PC-9 (cell line): ENCODE measurements at regions of chr3 and their contacts with region 1.

Region 1: GRCh38 chr3:101036213-101036618 is 43.0 kb upstream of the ABI3BP start:
- DNase-seq: peak; percentile 91 to 99
- H3K4me3 ChIP-seq: peak overlapping the region; percentile 14; the same call in 1 of the 2 replicates
- H3K27ac ChIP-seq: peak overlapping the region; percentile 92
- H3K4me1 ChIP-seq: peaks cover 35% of the 10 kb centered on the region
- H3K27me3 ChIP-seq: no peaks in the 10 kb centered on the region
- CTCF ChIP-seq: no peak

Region 2: DNA sequence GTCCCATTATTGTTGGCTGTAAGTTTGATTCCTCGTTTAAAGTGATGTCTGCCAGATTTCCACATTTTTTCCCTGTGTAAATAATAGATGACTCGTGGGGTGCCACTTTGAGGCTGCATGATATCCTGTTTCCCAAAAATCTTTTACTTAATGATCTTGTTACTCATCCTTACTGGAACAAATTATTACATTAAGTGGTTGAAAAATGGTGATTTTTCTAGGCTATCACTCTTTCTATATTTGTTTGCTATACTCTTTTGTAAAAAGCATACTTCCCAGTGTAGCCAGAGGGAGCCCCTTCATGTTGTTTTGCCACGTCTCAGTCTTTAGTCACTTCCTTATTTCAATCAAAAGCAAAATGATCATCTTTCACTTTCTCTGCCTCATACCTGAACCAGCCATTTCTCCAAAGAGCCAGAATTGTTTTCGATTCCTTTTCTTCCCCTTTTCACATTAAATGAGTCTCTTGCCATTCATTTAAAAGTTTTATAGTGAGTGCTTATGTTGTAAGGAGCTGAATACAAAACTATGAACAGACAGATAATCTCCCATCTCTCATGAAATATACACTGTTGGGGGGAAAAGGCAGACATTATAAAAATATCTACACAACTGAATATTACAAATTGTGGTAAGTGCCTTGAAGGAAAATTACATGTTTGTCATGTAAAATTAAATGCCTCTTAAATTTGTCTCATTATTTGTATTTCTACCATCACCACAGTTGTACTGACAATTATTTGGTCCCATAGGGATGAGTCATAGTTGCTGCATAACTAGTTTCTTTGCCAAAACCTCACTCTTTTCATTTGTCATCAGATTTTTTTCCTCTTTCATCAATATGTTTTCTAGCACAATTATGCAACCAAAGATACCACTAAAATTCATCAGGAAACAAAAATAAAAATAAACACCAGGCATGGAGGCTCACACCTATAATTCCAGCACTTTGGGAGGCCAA is 385.3 kb before region 1 on chr3:
- CTCF ChIA-PET with region 1: no interaction called
- POLR2A ChIA-PET with region 1: no interaction called
- intact Hi-C with region 1: loop called (anchors 5 kb)
- DNase-seq: peak in 1 of 2 experiments; percentile 86
- H3K4me3 ChIP-seq: peak overlapping the region; percentile 7; the same call in 1 of the 2 replicates
- H3K27ac ChIP-seq: peak overlapping the region; percentile 52
- H3K4me1 ChIP-seq: peaks cover 20% of the 10 kb centered on the region
- H3K27me3 ChIP-seq: no peaks in the 10 kb centered on the region
- CTCF ChIP-seq: peak; percentile 47

Region 3: DNA sequence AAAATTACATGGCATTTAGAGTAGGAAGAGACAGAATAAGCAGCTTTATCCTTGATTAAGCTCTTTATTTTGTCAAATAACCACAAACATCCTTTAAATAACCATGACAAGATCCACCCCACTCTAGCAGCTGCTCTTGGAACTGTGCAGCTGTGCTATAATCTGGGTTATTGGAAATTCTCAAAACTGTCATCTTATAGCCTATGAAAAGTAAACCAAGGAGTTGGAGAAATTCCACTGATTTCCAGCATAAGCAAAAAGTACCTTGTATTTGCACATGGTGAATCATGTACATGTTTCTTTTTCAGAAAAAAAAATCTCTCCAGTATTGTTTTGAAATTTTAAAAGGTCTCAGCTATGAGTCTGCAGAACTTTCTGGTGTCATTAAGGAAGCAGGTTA is 45.8 kb after region 1 on chr3:
- CTCF ChIA-PET with region 1: no interaction called
- POLR2A ChIA-PET with region 1: no interaction called
- intact Hi-C with region 1: no loop called
- DNase-seq: no peak
- H3K4me3 ChIP-seq: no peak overlapping the region
- H3K27ac ChIP-seq: no peak overlapping the region
- H3K4me1 ChIP-seq: no peaks in the 10 kb centered on the region
- H3K27me3 ChIP-seq: no peaks in the 10 kb centered on the region
- CTCF ChIP-seq: no peak